ENCODE measurements at regions of chr6 and their contacts with region 1.

Region 1: DNA sequence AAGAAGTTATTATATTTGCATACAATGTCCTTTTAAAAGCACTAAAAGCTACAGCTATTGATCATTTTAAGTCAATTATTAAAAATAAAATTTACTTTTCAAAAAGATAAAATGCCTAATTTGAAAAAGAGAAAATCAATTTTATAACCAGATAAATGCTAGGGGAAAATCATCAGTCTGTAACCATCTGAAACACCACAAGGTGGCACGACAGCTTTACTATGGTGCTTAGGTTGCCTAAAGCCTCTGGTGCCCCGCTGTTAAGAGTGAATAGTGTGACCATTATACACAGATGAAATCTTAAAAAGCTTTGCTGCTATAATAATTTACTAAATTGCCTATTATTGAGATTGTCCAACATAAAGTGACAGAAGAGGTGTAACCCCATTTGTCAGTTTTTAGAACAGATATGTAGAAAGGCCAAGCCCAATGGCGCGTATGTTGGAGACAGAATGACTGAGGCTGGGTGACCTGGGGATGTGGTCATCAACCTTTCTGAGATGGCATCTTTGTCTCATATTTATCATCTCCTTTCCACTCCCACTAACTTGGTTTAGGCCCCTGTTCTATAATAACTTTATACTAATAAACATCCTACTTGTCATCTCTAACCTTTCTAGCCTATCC is 100.8 kb downstream of the MOXD1 start:
- DNase-seq: peak; percentile 20
- ATAC-seq: peak; percentile 93
- H3K4me3 ChIP-seq: no peak overlapping the region
- H3K27ac ChIP-seq: no peak overlapping the region
- H3K4me1 ChIP-seq: no peaks in the 10 kb centered on the region
- H3K27me3 ChIP-seq: no peaks in the 10 kb centered on the region
- CTCF ChIP-seq: peak; percentile 69

Region 2: GRCh38 chr6:132279592-132280139 is 20.8 kb before region 1 on chr6:
- CTCF ChIA-PET with region 1: interaction called, 20 read pairs
- POLR2A ChIA-PET with region 1: no interaction called
- in situ Hi-C with region 1: no loop called
- intact Hi-C with region 1: loop called (anchors 2 kb)
- DNase-seq: peak; percentile 72
- ATAC-seq: peak; percentile 86
- H3K4me3 ChIP-seq: peak overlapping the region; percentile 29 to 58
- H3K27ac ChIP-seq: no peak overlapping the region
- H3K4me1 ChIP-seq: no peaks in the 10 kb centered on the region
- H3K27me3 ChIP-seq: no peaks in the 10 kb centered on the region
- CTCF ChIP-seq: peak; percentile 94

Region 3: GRCh38 chr6:132456700-132457143 is 156.3 kb after region 1 on chr6:
- CTCF ChIA-PET with region 1: no interaction called
- POLR2A ChIA-PET with region 1: no interaction called
- in situ Hi-C with region 1: no loop called
- intact Hi-C with region 1: no loop called
- DNase-seq: no peak
- ATAC-seq: no peak
- H3K4me3 ChIP-seq: no peak overlapping the region
- H3K27ac ChIP-seq: no peak overlapping the region
- H3K4me1 ChIP-seq: no peaks in the 10 kb centered on the region
- H3K27me3 ChIP-seq: no peaks in the 10 kb centered on the region
- CTCF ChIP-seq: no peak

Region 4: DNA sequence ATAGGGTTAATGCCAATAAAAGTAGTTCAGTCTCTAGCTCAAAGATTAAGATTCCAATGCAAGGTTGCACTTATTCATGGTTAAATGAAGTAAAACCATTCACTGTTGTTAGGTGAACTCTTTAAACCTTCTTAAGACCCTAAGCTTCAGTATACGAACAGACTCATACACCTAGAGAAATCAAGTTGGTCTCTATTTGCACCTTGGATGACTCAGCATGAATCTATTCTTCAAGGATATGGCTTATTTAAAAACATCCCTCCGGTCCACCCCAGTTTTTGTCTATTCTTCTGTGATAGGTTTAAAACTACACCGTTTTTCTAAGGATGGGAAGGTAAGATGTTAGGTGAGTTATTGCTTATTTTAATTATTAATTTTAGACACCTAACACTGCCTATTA is 236.7 kb after region 1 on chr6:
- CTCF ChIA-PET with region 1: no interaction called
- POLR2A ChIA-PET with region 1: no interaction called
- in situ Hi-C with region 1: no loop called
- intact Hi-C with region 1: no loop called
- DNase-seq: no peak
- ATAC-seq: no peak
- H3K4me3 ChIP-seq: no peak overlapping the region
- H3K27ac ChIP-seq: no peak overlapping the region
- H3K4me1 ChIP-seq: no peaks in the 10 kb centered on the region
- H3K27me3 ChIP-seq: peaks cover 11% of the 10 kb centered on the region; the same call in 1 of the 2 replicates
- CTCF ChIP-seq: no peak